ENCODE measurements at regions of chr10 and their contacts with region 1.

Region 1: GRCh38 chr10:32445740-32446535 is at the start of gene CCDC7:
- DNase-seq: peak; percentile 94
- ATAC-seq: peak; percentile 99
- total RNA-seq, gene CCDC7: 16.7 TPM

Region 2: DNA sequence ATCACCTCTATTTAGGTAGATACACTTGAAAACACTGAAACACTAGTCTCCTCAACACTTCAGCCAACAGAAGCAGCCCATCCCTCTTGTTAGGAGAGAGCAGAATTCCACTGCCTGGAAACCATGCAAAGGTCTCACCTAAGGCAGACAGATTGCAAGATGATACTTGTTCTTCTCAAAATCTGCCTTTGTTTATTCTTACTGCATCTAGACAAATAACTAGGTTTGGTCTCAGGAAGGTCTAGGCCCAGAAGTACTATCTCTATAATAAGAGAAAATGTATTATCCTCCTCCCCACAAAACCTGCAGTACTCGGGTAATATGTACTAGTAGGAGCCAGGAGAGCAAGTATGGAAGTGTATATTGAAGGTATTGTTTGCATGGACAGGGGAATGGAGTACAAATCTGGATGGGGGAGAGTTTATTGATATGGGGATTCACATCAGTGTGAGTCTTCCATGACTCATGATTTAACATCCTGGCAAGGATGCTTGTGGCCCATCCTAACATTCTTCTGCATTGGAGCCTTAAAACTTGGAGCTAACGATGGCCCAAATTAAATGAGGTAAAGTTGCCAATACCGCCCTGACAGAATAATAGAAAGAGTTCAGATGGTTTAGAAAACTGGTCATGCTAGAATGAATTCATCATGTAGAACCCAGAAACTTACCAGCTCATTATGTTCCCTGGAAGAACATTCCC is 208.1 kb before region 1 on chr10:
- intact Hi-C with region 1: no loop called
- DNase-seq: no peak
- ATAC-seq: no peak

Region 3: DNA sequence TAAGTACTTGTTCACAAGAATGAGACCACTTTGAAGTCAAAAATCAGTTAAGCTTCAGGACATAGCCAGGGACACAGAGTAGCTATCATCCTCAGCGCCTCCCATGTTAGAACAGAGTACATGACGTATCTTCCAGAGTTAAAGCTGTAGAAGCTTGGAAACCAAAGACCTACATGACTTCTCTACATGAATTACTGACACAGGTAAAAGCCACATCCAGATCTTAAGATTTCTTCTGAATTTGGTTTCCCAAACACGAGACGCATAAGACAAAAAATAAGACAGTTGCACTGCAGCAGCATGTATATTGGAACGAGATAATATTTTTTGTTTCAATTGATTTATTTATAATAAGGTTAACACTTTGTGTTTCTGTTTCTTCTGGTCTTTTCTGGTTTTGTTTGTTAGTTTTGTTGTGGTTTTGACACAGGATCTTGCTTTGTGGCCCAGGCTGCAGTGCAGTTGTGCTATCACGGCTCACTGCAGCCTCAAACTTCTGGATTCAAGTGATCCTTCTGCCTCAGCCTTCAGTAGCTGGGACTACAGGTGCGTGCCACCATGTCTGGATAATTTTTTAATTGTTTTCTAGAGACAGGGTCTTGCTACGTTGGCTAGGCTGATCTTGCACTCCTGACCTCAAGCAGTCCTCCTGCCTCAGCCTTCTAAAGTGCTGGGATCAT is 88.7 kb before region 1 on chr10:
- intact Hi-C with region 1: no loop called
- DNase-seq: no peak
- ATAC-seq: no peak

Region 4: GRCh38 chr10:32379950-32380551 is 65.9 kb before region 1 on chr10:
- intact Hi-C with region 1: loop called (anchors 5 kb)
- DNase-seq: no peak
- ATAC-seq: peak; percentile 9